Pancreas (tissue), 10 donors: ENCODE measurements at regions of chr3 and their contacts with region 1.

Region 1: DNA sequence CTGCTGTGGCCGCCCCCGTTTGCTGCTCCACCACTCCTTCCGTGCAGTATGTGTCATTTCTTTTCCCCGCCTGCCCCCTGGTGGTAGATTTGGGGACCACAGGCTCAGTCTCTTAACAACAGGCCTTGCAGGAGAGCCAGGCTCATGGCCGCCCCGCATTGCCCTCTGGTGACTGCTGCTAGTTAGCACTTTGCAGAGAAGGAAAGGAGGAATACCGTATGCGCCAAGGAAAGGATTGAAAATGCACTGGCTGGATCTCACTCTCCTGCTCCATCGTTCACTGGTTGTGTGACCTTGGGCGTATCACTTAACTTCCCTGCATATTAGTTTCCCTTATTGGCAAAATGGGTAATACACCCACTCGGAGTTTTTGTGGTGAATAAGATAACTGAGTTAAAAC is 39.3 kb upstream of the PXYLP1 start:
- DNase-seq: peak; percentile 93 to 100 (median 98)
- ATAC-seq: peak; percentile 99 to 100 (median 100)
- H3K4me3 ChIP-seq: no peak overlapping the region
- H3K27ac ChIP-seq: no peak overlapping the region
- H3K4me1 ChIP-seq: peaks cover 0 to 3% (median 0%) of the 10 kb centered on the region in 3 donors
- H3K27me3 ChIP-seq: no peaks in the 10 kb centered on the region
- CTCF ChIP-seq: peak; percentile 94 to 99 (median 96)

Region 2: GRCh38 chr3:140898340-140899180 is 293.8 kb before region 1 on chr3:
- intact Hi-C with region 1: loop called in 2 of 3 experiments (anchors 5 to 10 kb)
- DNase-seq: peak in 3 of 6 donors; percentile 29 to 47 (median 33)
- ATAC-seq: peak; percentile 81 to 99 (median 96)
- H3K4me3 ChIP-seq: no peak overlapping the region
- H3K27ac ChIP-seq: no peak overlapping the region
- H3K4me1 ChIP-seq: no peaks in the 10 kb centered on the region
- H3K27me3 ChIP-seq: no peaks in the 10 kb centered on the region
- CTCF ChIP-seq: peak; percentile 23 to 57 (median 50)

Region 3: DNA sequence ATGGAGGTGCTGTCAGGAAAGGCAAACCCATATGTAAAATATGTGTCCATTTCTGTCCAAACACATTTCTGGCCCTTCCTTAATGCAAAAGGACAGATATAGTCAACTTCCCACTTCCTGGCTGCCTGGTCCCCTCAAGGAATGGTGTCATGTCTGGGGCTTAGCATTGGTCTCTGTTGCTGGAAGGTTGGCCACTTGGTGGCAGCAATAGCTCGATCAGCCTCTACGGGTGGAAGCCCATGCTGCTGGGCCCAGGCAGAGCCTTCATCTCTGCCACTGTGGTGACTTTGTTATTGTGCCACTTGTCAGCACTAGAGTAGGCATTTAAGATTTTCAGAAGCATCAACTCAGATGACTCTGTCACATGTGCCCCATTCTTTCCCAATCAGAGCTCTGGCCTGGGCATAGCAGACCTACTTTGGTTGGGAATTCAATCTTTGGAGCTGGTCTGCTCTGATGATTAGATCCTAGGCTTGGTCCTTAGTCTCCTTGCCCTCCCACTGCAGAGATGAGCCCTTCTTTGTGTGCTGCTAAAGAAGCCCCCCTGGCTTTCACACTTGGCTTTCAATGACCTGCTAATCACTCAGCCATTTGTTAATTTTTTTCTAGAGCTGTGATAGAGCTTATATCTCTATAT is 192.2 kb before region 1 on chr3:
- intact Hi-C with region 1: loop called (anchors 5 to 10 kb)
- DNase-seq: peak; percentile 41 to 78 (median 66)
- ATAC-seq: peak; percentile 88 to 100 (median 100)
- H3K4me3 ChIP-seq: no peak overlapping the region
- H3K27ac ChIP-seq: no peak overlapping the region
- H3K4me1 ChIP-seq: no peaks in the 10 kb centered on the region
- H3K27me3 ChIP-seq: no peaks in the 10 kb centered on the region
- CTCF ChIP-seq: peak; percentile 17 to 72 (median 62)

Region 4: DNA sequence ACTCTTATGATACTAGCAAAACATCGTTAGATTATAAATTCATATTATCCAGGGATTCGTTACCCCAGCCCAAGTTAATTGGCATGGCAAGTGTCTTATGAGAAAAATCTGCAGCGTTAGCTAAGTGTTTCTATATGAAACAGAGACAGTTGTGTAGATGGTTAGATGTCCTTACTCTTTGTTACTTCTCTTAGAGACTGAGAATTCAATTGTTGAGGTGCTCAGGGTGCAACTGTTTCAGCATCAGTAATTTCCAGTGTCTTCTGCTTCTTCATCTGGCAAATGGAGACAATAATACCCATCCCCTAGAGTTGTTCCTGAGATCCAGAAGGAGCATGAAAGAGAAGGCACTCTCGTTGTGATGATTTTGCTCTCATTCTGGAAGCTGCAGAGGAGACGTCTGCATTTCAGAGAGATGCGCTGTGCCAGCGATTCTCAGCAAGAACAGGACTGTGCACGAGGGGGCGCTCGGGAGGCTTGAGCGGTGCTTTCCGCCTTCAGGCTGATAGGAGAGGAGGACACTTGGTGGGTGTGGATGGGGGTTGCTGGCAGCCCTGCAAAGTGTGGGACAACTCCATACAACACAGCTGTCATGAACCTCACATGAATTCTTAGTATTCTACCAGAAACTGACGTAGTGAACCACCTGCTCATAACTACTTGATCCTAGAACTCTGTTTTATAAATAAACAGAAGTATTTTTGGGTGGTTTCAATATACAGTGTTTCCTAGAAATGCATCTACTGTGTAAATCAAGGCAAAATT is 180.9 kb before region 1 on chr3:
- intact Hi-C with region 1: loop called in 2 of 3 experiments (anchors 5 to 10 kb)
- DNase-seq: peak; percentile 60 to 94 (median 80)
- ATAC-seq: peak; percentile 81 to 96 (median 92)
- H3K4me3 ChIP-seq: no peak overlapping the region
- H3K27ac ChIP-seq: no peak overlapping the region
- H3K4me1 ChIP-seq: no peaks in the 10 kb centered on the region
- H3K27me3 ChIP-seq: no peaks in the 10 kb centered on the region
- CTCF ChIP-seq: peak; percentile 44 to 76 (median 62)

Region 5: DNA sequence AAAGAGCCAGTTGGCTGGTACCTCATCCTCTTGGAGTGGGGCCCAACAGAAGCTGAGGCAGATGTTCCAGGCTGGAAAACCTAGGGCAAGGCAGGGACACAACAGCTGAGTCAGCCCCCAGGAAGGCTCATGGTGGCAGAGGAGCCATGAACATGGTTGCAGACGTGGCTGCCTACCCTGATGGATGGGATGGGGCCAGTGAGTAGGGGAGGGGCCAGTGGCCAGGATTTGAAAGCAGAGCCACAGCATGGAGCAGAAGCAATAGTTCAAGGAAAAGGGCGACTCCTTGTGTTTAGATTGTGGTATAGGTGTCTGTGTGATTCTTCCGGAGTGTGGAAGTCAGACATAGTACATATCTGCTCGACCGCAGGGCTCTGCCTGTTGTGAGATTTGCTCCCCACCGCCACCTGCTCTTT is 63.5 kb after region 1 on chr3:
- intact Hi-C with region 1: no loop called
- DNase-seq: peak in 1 of 6 donors; percentile 47
- ATAC-seq: peak; percentile 91 to 97 (median 96)
- H3K4me3 ChIP-seq: no peak overlapping the region
- H3K27ac ChIP-seq: no peak overlapping the region
- H3K4me1 ChIP-seq: no peaks in the 10 kb centered on the region
- H3K27me3 ChIP-seq: no peaks in the 10 kb centered on the region
- CTCF ChIP-seq: peak; percentile 13 to 36 (median 28)